Mammary epithelial cell (primary cell): ENCODE measurements at regions of chr11 and their contacts with region 1.

Region 1: GRCh38 chr11:126194121-126194543 is 17.3 kb downstream of the RPUSD4 start:
- DNase-seq: peak; percentile 16
- H3K4me3 ChIP-seq: no peak overlapping the region
- H3K27ac ChIP-seq: no peak overlapping the region
- H3K4me1 ChIP-seq: no peaks in the 10 kb centered on the region
- H3K27me3 ChIP-seq: no peaks in the 10 kb centered on the region
- CTCF ChIP-seq: peak; percentile 67 to 70

Region 2: GRCh38 chr11:125923012-125923579 is 271.0 kb before region 1 on chr11:
- CTCF ChIA-PET with region 1: interaction called, 3 read pairs
- dilution Hi-C with region 1: no loop called
- in situ Hi-C with region 1: loop called in 1 of 2 experiments (anchors 5 kb)
- intact Hi-C with region 1: loop called (anchors 1 kb)
- DNase-seq: peak; percentile 50
- H3K4me3 ChIP-seq: no peak overlapping the region
- H3K27ac ChIP-seq: no peak overlapping the region
- H3K4me1 ChIP-seq: no peaks in the 10 kb centered on the region
- H3K27me3 ChIP-seq: peaks cover 3% of the 10 kb centered on the region
- CTCF ChIP-seq: peak; percentile 88 to 93

Region 3: DNA sequence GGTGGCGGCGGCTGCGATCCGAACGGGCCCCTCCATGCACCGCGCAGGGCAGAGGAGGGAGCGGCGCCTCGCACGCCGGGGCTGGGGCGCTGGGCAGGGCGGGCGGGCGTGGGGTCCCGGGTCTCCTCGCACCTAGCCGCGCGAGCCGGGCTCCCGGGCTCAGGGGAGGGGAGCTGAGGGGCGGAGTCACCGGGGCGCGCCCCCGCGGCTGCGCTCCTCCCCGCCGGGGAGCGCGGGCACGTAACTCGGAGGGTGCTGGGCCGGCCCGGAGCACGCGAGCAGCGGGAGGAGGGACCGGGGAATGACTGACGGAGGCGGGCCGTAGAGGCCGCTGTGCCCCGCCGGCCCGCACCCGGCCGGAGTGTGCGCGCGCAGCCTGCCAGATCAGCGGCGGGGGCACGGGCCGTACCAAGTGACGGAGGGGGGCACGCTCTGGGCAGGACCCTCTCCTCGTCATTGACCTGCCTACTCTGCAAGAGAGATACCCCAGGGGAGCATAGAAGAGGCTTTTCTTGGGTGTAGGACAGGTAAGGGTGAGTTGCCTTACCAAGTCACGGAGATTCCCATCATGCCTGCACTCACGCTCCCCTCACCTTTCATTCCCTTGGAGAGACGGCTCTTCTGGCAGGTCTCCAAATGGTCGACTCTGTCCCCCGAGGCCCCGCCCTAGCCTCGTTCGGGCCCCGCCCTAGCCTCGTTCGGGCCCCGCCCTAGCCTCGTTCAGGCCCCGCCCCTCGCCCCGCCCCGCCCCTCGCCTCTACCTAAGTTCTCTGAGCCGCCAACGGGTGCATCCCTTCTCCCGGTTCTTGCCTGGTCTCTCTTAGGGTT is 131.2 kb before region 1 on chr11 and contains the start of gene CDON:
- CTCF ChIA-PET with region 1: no interaction called
- dilution Hi-C with region 1: no loop called
- in situ Hi-C with region 1: no loop called
- intact Hi-C with region 1: loop called (anchors 2 kb)
- DNase-seq: peak; percentile 86
- H3K4me3 ChIP-seq: peak within 1 kb of the TSS; percentile 56 to 67 (median 60)
- H3K27ac ChIP-seq: peak within 1 kb of the TSS; percentile 95
- H3K4me1 ChIP-seq: peaks cover 4% of the 10 kb centered on the region
- H3K27me3 ChIP-seq: no peaks in the 10 kb centered on the region
- CTCF ChIP-seq: peak in 1 of 2 donors; percentile 10
- total RNA-seq, gene CDON: 1.9 to 3.8 TPM

Region 4: DNA sequence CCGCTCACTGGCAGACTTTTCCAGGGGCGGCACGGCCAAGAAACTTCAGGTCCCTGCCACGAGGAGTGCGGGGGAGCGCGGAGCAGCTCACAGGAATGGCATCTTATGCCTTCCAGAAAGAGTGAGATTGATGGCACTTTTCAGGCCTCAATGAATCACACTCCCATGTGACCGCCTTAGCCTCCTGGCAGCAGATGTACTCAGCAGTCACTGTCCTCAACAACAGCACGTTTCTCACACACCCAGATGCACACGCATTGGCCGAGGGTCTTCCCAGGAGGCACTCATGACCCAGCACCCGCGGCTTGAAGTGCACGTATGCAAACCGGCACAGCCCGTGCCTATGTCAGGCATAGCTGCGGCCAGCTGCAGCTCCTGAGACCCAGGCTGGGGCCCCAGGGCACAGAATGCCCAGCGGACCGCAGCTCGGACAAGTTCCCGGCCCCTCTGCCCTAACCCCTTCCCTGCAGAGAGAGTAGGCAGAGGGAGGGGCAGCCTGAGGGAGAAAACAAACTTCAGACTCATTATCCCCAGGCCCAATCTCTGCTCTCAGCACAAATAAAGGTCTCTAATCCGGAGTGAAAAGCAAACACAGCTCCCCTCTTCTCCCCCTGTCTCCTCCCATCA is 30.9 kb before region 1 on chr11:
- CTCF ChIA-PET with region 1: no interaction called
- dilution Hi-C with region 1: loop called (anchors 5 kb)
- in situ Hi-C with region 1: no loop called
- intact Hi-C with region 1: no loop called
- DNase-seq: peak; percentile 72
- H3K4me3 ChIP-seq: no peak overlapping the region
- H3K27ac ChIP-seq: no peak overlapping the region
- H3K4me1 ChIP-seq: peaks cover 9% of the 10 kb centered on the region
- H3K27me3 ChIP-seq: peaks cover 2% of the 10 kb centered on the region
- CTCF ChIP-seq: peak in 1 of 2 donors; percentile 7